ENCODE measurements at regions of chr17 and their contacts with region 1.

Region 1: GRCh38 chr17:42116705-42117396 is 4.3 kb downstream of the KAT2A start:
- DNase-seq: peak; percentile 83
- ATAC-seq: peak; percentile 4 to 38

Region 2: DNA sequence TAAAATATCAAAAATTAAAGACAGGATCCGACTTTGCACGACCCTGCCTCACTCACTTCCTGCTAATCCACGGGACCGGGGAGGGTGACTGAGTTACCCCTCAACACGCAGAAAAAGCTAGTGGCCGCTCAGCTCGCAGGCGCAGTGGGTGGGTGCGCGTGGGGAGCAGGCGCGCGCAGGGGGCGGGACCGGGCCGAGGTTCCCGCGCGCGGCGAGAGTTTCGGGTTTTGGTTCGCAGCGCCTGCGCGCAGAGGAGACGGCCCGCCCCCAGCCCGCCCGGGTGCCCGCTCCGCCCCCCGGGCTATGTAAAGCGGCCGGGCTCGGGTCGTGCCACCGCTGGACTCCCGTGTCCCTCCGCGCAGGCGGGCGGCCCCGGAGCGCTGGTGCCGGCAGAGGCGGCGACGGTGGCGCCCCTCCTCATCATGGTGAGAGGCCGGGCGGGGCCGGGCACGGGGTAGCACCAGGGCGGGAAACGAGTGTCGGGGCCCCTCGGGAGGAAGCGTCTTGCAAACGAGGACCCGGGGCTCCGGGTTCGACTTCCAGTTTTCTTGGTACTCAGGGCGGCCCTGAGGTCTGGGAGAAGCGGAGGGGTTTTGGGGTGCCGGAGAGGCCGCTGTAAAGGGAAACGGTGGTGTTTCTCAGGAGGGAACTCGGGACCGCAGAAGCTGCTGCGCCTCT is 150.2 kb before region 1 on chr17 and contains the start of gene CNP:
- intact Hi-C with region 1: loop called (anchors 2 to 5 kb)
- DNase-seq: peak; percentile 93
- ATAC-seq: peak; percentile 94 to 95
- total RNA-seq, gene CNP: 40.3 to 43.7 TPM

Region 3: GRCh38 chr17:42027961-42028790 is 88.7 kb before region 1 on chr17:
- intact Hi-C with region 1: loop called (anchors 1 to 5 kb)
- DNase-seq: no peak
- ATAC-seq: no peak

Region 4: DNA sequence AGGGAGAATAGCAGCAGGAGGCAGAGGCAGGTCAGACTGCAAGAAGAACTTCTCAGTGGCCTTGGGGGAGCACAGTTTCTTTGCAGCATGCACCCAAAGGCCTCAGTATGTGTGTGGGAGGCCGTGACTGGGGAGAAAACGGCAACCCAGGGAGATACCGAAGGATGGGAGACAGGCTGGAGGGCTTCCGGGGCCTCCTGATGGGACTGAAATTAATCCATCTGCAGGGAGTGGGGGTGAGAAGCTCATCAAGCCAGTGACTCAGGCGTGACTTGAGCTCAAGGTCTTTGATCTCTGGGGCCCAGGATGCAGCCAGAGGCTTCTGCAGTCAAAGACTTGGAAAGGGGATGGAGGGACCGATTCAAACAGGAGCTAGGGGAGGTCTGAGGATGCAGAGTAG is 61.4 kb before region 1 on chr17:
- intact Hi-C with region 1: no loop called
- DNase-seq: no peak
- ATAC-seq: no peak

Region 5: DNA sequence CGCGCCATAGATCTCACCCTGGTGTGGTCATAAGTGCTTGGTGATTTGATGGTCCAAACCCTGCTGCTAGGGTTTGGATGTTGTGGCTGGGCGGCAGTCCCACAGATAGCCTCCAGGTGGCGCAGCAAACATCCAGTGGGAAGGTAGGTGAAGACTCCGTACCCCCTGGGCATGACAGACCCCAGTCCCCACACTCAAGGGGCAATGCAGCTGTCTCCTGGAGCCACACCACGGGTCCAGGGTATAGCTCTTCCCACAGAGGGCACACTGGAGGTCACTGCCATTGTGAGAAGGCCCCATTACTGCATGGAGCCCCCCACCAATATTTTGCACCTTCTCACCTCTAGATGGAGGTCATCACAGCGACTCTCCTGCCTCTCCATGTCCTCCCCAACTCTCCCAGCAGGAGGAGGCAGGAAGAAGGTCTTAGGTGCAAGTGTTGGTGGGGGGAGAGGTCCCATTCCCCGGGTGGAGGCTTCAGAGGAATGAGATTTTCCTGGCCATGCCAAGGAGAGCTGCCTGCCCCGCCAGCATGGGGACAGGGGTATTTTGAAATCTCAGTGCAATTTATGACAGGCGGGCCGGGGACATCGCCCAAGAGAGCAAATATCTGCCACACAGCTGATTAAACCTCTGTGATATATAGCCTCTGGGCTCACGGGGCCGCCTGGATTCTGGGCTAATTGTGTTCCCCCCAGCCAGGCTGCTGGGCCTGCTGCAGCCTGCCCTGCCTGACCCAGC is 49.3 kb before region 1 on chr17:
- intact Hi-C with region 1: loop called in 1 of 2 experiments (anchors 5 kb)
- DNase-seq: peak; percentile 51
- ATAC-seq: peak in 1 of 2 donors; percentile 34

Region 6: DNA sequence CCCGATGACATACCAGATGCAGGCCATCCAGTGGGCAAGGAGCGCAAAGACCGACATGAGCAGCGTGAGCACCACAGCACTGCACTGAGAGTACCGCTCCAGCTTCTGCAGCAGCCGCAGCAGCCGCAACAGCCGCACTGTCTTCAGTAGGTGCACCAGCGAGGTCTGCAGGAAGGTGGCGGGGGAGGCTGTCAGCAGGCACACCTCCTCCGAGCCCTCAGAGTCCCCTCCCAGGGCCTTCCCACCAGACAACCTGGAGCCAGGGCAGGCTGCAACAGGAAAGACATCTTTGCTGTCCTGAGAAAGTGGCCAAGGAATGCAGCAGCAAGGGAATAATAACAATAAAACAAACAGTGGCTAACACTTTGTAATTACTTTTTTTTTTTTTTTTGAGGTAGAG is 55.0 kb after region 1 on chr17:
- intact Hi-C with region 1: no loop called
- DNase-seq: no peak
- ATAC-seq: no peak

Region 7: GRCh38 chr17:42183741-42184711 is 67.2 kb after region 1 on chr17:
- intact Hi-C with region 1: loop called in 1 of 2 experiments (anchors 5 kb)
- DNase-seq: peak; percentile 82
- ATAC-seq: peak; percentile 86 to 89

Measured in left cardiac atrium (tissue), 4 donors.